Transverse colon (tissue), 4 donors: ENCODE measurements at regions of chr12 and their contacts with region 1.

Region 1: GRCh38 chr12:118312578-118312977 is 60.1 kb downstream of the TAOK3 start:
- DNase-seq: no peak
- H3K4me3 ChIP-seq: no peak overlapping the region
- H3K27ac ChIP-seq: no peak overlapping the region
- H3K4me1 ChIP-seq: peaks cover 0 to 7% (median 5%) of the 10 kb centered on the region in 4 donors
- H3K27me3 ChIP-seq: no peaks in the 10 kb centered on the region
- CTCF ChIP-seq: no peak
- EP300 ChIP-seq: no peak
- POLR2A ChIP-seq: no peak

Region 2: GRCh38 chr12:116662612-116663144 is 1649.9 kb before region 1 on chr12:
- in situ Hi-C with region 1: no loop called
- intact Hi-C with region 1: loop called (anchors 5 kb)
- DNase-seq: peak; percentile 28
- H3K4me3 ChIP-seq: no peak overlapping the region
- H3K27ac ChIP-seq: peak overlapping the region in 1 of 4 donors; percentile 13
- H3K4me1 ChIP-seq: peaks cover 0 to 25% (median 22%) of the 10 kb centered on the region in 4 donors
- H3K27me3 ChIP-seq: no peaks in the 10 kb centered on the region
- CTCF ChIP-seq: no peak
- EP300 ChIP-seq: no peak
- POLR2A ChIP-seq: no peak

Region 3: GRCh38 chr12:118526255-118527095 is 213.9 kb after region 1 on chr12:
- in situ Hi-C with region 1: no loop called
- intact Hi-C with region 1: no loop called
- DNase-seq: no peak
- H3K4me3 ChIP-seq: no peak overlapping the region
- H3K27ac ChIP-seq: no peak overlapping the region
- H3K4me1 ChIP-seq: no peaks in the 10 kb centered on the region
- H3K27me3 ChIP-seq: no peaks in the 10 kb centered on the region
- CTCF ChIP-seq: no peak
- EP300 ChIP-seq: no peak
- POLR2A ChIP-seq: no peak